Naive thymus-derived CD4-positive, alpha-beta T cell (primary cell): ENCODE measurements at regions of chr15 and their contacts with region 1.

Region 1: DNA sequence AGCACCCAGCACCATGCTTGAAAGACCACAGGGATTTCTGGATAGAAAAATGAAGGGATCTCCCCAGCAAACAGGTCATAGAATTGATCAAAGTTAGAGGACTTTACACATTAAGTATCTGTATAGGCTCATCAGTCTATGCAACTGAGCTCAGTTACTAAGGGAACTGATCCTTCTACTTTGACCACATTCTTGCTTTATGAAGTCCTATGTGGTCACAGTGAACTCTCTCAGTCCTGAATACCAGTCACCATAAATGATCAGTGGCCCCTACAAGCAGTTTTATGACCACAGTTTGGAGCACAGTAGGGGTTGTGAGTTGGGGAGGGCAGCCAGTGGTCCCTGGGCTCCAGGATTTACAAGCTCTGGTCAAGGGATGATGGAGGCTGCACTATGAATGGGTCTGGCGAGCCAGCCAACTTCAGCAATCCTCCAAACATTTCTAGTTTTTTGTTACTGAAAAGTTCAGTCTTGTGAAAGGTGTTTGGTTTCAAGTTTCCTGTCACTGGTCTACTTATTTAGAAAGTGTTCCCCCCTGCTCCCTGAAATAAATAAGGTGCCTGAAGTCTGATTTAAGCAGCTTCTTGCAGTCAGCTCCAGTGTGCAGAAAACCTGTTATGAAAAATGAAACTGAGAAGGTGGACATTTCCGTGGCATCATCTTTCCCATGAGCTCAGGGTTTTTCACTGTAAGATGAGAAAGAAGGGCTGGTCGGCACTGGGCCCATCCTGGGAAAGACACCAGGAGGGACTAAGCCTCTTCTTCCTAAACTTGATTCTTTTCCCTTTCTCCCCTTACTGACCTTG is 75.5 kb downstream of the DAPK2 start:
- DNase-seq: peak in 4 of 9 donors; percentile 3 to 44 (median 10)
- ATAC-seq: peak; percentile 52
- H3K4me3 ChIP-seq: peak overlapping the region; percentile 17
- H3K4me3 Mint-ChIP-seq: peak overlapping the region; percentile 6 to 87 (median 54)
- H3K27ac ChIP-seq: peak overlapping the region; percentile 1
- H3K27ac Mint-ChIP-seq: peak overlapping the region; percentile 73 to 99 (median 83)
- H3K4me1 ChIP-seq: peaks cover 20 to 24% of the 10 kb centered on the region in 2 donors
- H3K4me1 Mint-ChIP-seq: peaks cover 24 to 46% (median 30%) of the 10 kb centered on the region in 7 donors
- H3K27me3 ChIP-seq: no peaks in the 10 kb centered on the region
- H3K27me3 Mint-ChIP-seq: no peaks in the 10 kb centered on the region

Region 2: GRCh38 chr15:63953524-63953923 is 17.3 kb before region 1 on chr15:
- CTCF ChIA-PET with region 1: no interaction called
- POLR2A ChIA-PET with region 1: no interaction called
- intact Hi-C with region 1: no loop called
- DNase-seq: no peak
- ATAC-seq: no peak
- H3K4me3 ChIP-seq: no peak overlapping the region
- H3K4me3 Mint-ChIP-seq: no peak overlapping the region
- H3K27ac ChIP-seq: no peak overlapping the region
- H3K27ac Mint-ChIP-seq: peak overlapping the region in 2 of 9 donors; percentile 29 to 54
- H3K4me1 ChIP-seq: no peaks in the 10 kb centered on the region
- H3K4me1 Mint-ChIP-seq: peaks cover 4 to 13% (median 9%) of the 10 kb centered on the region in 7 donors
- H3K27me3 ChIP-seq: no peaks in the 10 kb centered on the region
- H3K27me3 Mint-ChIP-seq: peaks cover 0 to 28% (median 0%) of the 10 kb centered on the region in 5 donors

Region 3: DNA sequence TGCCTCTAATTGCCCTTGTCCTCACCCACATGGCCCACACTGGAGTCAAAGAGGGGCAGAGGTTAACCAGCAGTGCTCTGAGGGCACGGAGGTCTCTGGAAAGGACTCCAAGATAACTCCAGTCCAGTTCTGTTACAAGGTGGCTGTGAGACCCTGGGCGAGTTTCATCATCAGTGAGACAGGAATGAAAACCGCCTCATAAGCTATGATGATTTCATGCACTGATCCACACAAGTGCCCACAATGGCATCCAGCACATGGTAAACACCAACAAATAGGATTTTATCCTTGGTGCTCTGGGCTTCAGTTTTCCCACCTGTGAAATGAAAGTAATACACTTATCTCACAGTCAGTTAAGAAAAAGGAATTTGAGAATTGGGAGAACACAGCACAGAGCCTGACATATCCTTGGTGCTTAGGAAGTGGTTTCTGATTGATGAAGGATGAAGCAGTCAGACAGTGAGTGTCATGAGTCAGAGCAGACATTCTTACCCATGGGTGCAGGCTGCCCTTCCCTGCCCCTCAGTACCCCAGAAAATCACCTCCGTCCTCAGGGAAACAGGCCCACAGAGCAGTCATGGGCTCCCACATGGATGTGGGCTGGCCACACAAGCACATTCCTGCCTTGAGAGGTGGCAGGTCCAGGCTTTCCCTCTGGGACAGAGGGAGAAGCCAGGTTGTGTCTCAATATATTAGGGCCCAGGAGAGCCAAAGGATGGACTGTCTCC is 27.1 kb after region 1 on chr15:
- CTCF ChIA-PET with region 1: no interaction called
- POLR2A ChIA-PET with region 1: no interaction called
- intact Hi-C with region 1: loop called in 1 of 2 experiments (anchors 1 kb)
- DNase-seq: no peak
- ATAC-seq: no peak
- H3K4me3 ChIP-seq: no peak overlapping the region
- H3K4me3 Mint-ChIP-seq: peak overlapping the region in 1 of 10 donors; percentile 34
- H3K27ac ChIP-seq: no peak overlapping the region
- H3K27ac Mint-ChIP-seq: peak overlapping the region in 2 of 9 donors; percentile 31 to 43
- H3K4me1 ChIP-seq: no peaks in the 10 kb centered on the region
- H3K4me1 Mint-ChIP-seq: peaks cover 0 to 52% (median 8%) of the 10 kb centered on the region in 7 donors
- H3K27me3 ChIP-seq: no peaks in the 10 kb centered on the region
- H3K27me3 Mint-ChIP-seq: peaks cover 0 to 9% (median 6%) of the 10 kb centered on the region in 5 donors